ENCODE measurements at regions of chr3 and their contacts with region 1.

Region 1: DNA sequence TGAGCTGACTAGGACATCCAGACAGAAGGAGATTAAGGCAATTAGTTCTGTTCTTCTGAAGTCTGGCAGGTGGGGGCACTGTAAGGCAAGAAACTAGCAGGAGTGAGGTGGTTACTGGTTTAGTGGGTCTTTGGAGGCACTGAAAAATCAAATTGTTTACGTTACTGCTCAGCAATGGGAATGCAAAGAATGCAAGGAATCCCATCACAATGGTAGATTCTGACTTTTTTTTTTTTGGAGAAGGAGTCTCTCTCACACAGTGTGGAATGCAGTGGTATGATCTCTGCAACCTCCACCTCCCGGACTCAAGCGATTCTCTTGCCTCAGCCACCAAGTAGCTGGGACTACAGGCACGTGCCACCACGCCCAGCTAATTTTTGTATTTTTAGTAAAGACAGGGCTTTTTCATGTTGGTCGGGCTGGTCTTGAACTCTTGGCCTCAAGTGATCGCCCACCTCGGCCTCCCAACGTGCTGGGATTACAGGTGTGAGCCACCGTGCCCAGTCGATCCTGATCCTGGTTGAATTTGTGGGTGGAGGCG is 16.4 kb downstream of the FAM107A start:
- DNase-seq: peak; percentile 91
- H3K4me3 ChIP-seq: no peak overlapping the region
- H3K27ac ChIP-seq: peak overlapping the region; percentile 45
- H3K4me1 ChIP-seq: peaks cover 35% of the 10 kb centered on the region
- H3K27me3 ChIP-seq: no peaks in the 10 kb centered on the region
- CTCF ChIP-seq: peak; percentile 58 to 71
- POLR2A ChIP-seq: peak; percentile 40

Region 2: DNA sequence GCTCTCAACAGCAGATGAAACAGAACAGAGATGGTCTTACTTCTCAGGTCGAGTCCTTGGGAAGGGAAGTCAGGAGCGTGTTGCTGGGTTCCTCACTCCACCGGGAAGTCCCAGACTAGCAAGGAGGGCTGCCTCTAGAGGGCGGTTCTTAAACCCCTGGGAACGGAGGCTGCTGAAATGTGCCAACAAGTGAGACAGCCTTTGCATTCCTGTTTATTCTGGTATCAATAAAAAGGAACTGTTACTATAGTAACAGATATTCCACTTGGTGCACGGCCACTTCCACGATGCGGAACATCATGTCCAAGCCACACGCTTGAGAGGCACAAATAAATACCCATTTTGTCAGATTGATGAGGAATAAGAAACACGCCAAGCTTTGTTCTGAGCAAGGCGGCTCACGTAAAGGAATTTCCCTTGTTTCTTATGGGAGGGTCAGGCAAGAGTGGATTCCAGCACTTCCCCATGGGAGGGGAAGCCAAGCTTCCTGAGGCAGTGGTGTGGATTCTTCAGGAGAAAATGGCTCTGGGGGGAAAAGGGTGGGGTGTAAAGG is 16.5 kb after region 1 on chr3 and contains the start of gene FAM107A:
- CTCF ChIA-PET with region 1: interaction called, 10 read pairs
- POLR2A ChIA-PET with region 1: no interaction called
- dilution Hi-C with region 1: no loop called
- intact Hi-C with region 1: no loop called
- DNase-seq: peak; percentile 83
- H3K4me3 ChIP-seq: peak within 1 kb of the TSS in 2 of 3 experiments; percentile 15 to 70
- H3K27ac ChIP-seq: peak within 1 kb of the TSS; percentile 82
- H3K4me1 ChIP-seq: peaks cover 28% of the 10 kb centered on the region
- H3K27me3 ChIP-seq: no peaks in the 10 kb centered on the region
- CTCF ChIP-seq: peak; percentile 45 to 52
- POLR2A ChIP-seq: no peak
- total RNA-seq, gene FAM107A: 8.2 and 10.7 TPM in 2 replicates

Region 3: GRCh38 chr3:58659051-58659675 is 98.3 kb after region 1 on chr3:
- CTCF ChIA-PET with region 1: interaction called, 14 read pairs
- POLR2A ChIA-PET with region 1: no interaction called
- dilution Hi-C with region 1: no loop called
- intact Hi-C with region 1: loop called (anchors 1 kb)
- DNase-seq: peak; percentile 59
- H3K4me3 ChIP-seq: no peak overlapping the region
- H3K27ac ChIP-seq: no peak overlapping the region
- H3K4me1 ChIP-seq: peaks cover 2% of the 10 kb centered on the region
- H3K27me3 ChIP-seq: peaks cover 0 to 2% of the 10 kb centered on the region in 2 experiments
- CTCF ChIP-seq: peak; percentile 49 to 60
- POLR2A ChIP-seq: no peak

Region 4: DNA sequence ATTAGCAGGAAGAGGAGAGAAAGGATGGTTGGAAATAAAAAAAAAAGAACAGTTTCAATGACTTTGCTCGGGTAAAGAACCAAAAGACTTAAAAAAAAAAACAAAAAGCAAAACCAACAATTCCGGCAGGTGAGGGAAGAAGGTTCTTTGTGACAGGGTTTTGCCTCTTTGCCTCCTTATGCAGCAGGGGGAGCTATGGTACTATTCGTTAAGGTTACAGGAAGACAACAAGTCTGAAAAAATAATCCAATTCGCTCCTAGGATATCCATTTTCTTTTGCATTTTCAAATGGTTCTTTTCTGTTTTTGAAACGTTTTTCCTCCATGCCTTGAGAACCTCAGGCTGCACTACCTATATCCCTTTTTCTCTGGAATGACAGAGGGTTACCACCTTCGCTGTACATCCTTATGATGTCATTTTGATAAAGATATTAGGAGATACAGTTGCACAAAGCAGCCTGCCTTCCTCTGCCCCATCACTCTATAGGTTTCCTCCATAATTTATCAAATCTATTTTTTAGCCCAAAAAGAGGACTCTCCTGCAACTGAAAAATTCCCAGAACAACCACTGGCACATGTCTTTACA is 434.0 kb after region 1 on chr3:
- CTCF ChIA-PET with region 1: no interaction called
- POLR2A ChIA-PET with region 1: no interaction called
- dilution Hi-C with region 1: no loop called
- intact Hi-C with region 1: loop called (anchors 5 kb)
- DNase-seq: peak; percentile 60
- H3K4me3 ChIP-seq: no peak overlapping the region
- H3K27ac ChIP-seq: no peak overlapping the region
- H3K4me1 ChIP-seq: peaks cover 19% of the 10 kb centered on the region
- H3K27me3 ChIP-seq: no peaks in the 10 kb centered on the region
- CTCF ChIP-seq: peak; percentile 59 to 71
- POLR2A ChIP-seq: no peak

Region 5: DNA sequence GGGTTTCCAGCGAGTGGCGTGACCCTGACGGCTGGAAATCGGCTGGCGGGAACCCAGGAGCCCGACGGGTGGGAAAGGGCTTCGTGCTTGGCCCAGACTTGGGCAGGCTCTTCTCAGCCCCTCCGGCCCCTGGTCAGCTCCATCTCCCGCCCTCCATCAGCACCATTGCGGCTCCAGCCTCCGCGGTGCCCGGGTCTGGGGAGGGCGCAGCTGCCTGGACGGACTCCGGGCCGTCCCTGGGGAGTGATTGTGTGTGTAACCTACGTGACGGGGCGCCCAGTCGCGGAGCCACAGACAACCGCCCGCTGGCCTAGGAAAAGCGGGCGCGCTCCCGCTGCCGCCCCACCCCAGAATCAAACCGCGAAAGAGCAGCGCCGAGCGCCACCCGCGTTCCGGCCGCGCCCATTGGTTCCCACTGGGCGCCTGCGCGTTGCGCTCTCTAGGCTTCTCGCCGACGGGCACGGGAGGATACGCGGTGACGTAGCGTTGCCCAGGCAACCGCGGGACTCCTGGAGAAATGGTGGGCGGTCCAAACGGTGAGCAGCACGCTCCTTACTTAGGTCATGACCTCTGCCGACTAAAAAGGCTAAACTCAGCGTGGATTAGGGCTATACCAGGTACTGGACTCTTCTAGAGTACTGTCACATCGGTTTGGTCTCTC is 489.0 kb after region 1 on chr3 and contains the start of gene CFAP20DC:
- CTCF ChIA-PET with region 1: interaction called, 18 read pairs
- POLR2A ChIA-PET with region 1: no interaction called
- dilution Hi-C with region 1: no loop called
- intact Hi-C with region 1: loop called (anchors 1 kb)
- DNase-seq: peak; percentile 92
- H3K4me3 ChIP-seq: peak within 1 kb of the TSS; percentile 34 to 53 (median 51)
- H3K27ac ChIP-seq: peak within 1 kb of the TSS; percentile 37
- H3K4me1 ChIP-seq: peaks cover 6% of the 10 kb centered on the region
- H3K27me3 ChIP-seq: no peaks in the 10 kb centered on the region
- CTCF ChIP-seq: no peak
- POLR2A ChIP-seq: peak; percentile 93
- total RNA-seq, gene CFAP20DC: 1.9 and 2.1 TPM in 2 replicates

Region 6: DNA sequence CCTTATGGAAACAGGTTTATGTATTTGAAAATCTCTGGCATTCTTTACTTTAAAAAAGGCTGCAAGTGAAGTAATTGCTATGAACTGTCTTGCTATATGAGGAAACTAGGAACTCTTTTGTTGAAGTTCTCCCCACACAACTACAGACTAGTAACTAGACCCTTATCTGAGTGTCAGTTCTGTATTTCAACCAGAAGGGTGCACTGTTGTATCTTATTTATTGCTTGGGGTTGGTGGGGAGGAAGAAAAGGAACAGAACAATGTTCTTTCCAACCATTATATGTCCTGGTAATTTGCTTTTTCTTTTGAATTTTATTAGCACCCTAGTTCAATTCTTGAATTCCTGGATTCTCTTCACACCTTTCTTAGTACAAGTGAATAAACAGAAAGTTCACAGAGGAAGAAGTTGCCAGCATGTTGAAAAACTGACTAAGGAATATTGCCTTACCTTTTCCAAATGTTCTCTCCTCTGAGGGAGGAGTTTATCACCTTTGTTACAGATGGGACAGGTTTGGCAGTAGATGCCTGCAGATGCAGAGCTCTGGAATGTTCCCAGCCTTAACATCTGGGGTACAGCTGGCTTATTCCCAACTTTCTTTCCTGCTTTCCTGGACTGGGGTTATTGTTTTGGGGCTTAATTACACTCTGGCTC is 651.4 kb after region 1 on chr3:
- CTCF ChIA-PET with region 1: no interaction called
- POLR2A ChIA-PET with region 1: no interaction called
- dilution Hi-C with region 1: no loop called
- intact Hi-C with region 1: loop called (anchors 5 kb)
- DNase-seq: peak; percentile 44
- H3K4me3 ChIP-seq: no peak overlapping the region
- H3K27ac ChIP-seq: no peak overlapping the region
- H3K4me1 ChIP-seq: peaks cover 9% of the 10 kb centered on the region
- H3K27me3 ChIP-seq: peaks cover 3 to 8% of the 10 kb centered on the region in 2 experiments
- CTCF ChIP-seq: peak; percentile 36 to 41
- POLR2A ChIP-seq: no peak

Region 7: GRCh38 chr3:59857589-59858346 is 1296.9 kb after region 1 on chr3:
- CTCF ChIA-PET with region 1: interaction called, 7 read pairs
- POLR2A ChIA-PET with region 1: no interaction called
- dilution Hi-C with region 1: no loop called
- intact Hi-C with region 1: loop called (anchors 2 kb)
- DNase-seq: peak; percentile 58
- H3K4me3 ChIP-seq: no peak overlapping the region
- H3K27ac ChIP-seq: no peak overlapping the region
- H3K4me1 ChIP-seq: no peaks in the 10 kb centered on the region
- H3K27me3 ChIP-seq: no peaks in the 10 kb centered on the region
- CTCF ChIP-seq: peak; percentile 79 to 89
- POLR2A ChIP-seq: no peak